Dendritic cell treated with granulocyte-macrophage colony-stimulating factor and Interleukin-4, amounts not matched to agents 40 ng/mL and 50 ng/mL, for 4 days (primary cell): ENCODE measurements at regions of chr4 and their contacts with region 1.

Region 1: DNA sequence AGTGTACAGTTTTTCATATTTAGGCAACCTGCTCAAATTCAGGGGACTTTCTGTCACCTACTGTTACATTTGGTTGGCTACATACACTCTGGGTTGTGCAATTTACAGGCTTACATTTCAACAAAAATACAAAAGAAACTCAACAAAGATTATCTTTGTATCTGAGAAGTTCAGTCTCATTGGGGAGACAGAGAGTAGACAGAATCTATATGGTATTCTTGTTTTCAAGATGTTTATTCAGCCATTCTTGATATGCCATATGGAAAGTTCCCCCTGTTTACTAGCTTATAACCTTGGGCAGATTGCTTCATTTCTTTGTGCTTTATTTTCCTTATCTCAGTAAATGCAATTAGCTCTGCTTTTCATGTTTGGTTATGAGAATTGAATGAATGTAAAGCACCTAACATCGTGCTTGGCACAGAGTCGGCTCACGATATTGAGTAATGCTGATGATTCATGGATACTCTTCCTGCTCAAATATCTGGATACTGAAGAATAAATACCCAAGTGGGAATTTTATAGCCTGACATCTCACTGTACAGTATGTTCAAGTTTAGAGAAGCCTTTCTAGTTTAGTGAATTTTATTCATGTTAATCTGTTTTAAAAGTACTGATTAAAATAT is 96.5 kb upstream of the PACRGL start:
- H3K4me3 Mint-ChIP-seq: no peak overlapping the region
- H3K27ac Mint-ChIP-seq: no peak overlapping the region
- H3K4me1 Mint-ChIP-seq: no peaks in the 10 kb centered on the region
- H3K27me3 Mint-ChIP-seq: no peaks in the 10 kb centered on the region

Region 2: DNA sequence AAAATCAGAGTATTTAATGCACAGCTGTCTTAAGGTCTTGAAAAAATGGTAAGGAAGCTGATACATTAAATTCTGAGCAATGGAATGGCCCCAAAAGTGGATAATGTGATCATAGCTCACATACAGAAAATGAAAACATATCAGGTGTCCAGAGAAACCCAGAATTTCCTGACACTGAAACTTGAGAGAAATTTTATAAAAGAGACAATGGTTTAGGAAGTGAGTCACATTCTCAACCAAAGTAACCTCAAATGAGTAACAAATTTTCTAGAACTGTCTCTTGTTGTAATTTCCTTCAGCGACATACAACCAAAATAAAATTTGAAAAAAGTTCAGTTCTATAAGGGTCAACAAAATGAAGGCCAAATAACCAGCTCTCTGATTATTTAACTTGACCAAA is 59.1 kb after region 1 on chr4:
- intact Hi-C with region 1: loop called (anchors 10 kb)
- H3K4me3 Mint-ChIP-seq: no peak overlapping the region
- H3K27ac Mint-ChIP-seq: no peak overlapping the region
- H3K4me1 Mint-ChIP-seq: no peaks in the 10 kb centered on the region
- H3K27me3 Mint-ChIP-seq: peaks cover 20% of the 10 kb centered on the region